ENCODE measurements at regions of chr6 and their contacts with region 1.

Region 1: DNA sequence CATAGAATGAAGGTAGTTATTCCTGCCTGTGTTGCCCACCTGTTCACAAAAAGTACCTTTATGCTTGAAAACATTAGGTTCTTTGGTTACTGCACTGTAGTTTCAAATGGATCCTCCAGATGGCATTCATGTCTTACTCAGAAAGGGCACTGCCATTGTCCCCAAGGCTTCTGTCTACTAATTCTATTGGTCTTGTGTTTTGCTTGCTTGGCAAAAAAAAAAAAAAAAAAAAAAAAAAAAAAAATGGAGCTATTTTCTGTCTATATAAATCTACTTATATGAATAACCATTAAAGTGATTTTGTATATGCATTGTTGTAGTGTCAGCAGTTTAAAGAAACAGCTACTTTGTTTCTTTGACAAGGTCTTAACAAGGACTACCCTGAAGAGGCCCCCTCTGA is 12.7 kb upstream of the EFHC1 start:
- DNase-seq: peak; percentile 79
- ATAC-seq: peak; percentile 64
- H3K4me3 ChIP-seq: no peak overlapping the region
- H3K27ac ChIP-seq: no peak overlapping the region
- H3K4me1 ChIP-seq: no peaks in the 10 kb centered on the region
- H3K27me3 ChIP-seq: no peaks in the 10 kb centered on the region
- CTCF ChIP-seq: peak; percentile 78

Region 2: GRCh38 chr6:52284460-52285176 is 122.8 kb before region 1 on chr6 and contains the start of gene MCM3:
- CTCF ChIA-PET with region 1: interaction called, 17 read pairs
- POLR2A ChIA-PET with region 1: interaction called, 8 read pairs
- intact Hi-C with region 1: no loop called
- DNase-seq: peak; percentile 99
- ATAC-seq: peak; percentile 98
- H3K4me3 ChIP-seq: peak within 1 kb of the TSS; percentile 93
- H3K27ac ChIP-seq: peak within 1 kb of the TSS; percentile 62
- H3K4me1 ChIP-seq: peaks cover 22% of the 10 kb centered on the region
- H3K27me3 ChIP-seq: no peaks in the 10 kb centered on the region
- CTCF ChIP-seq: no peak
- total RNA-seq, gene MCM3: 201 and 203 TPM in 2 replicates

Region 3: DNA sequence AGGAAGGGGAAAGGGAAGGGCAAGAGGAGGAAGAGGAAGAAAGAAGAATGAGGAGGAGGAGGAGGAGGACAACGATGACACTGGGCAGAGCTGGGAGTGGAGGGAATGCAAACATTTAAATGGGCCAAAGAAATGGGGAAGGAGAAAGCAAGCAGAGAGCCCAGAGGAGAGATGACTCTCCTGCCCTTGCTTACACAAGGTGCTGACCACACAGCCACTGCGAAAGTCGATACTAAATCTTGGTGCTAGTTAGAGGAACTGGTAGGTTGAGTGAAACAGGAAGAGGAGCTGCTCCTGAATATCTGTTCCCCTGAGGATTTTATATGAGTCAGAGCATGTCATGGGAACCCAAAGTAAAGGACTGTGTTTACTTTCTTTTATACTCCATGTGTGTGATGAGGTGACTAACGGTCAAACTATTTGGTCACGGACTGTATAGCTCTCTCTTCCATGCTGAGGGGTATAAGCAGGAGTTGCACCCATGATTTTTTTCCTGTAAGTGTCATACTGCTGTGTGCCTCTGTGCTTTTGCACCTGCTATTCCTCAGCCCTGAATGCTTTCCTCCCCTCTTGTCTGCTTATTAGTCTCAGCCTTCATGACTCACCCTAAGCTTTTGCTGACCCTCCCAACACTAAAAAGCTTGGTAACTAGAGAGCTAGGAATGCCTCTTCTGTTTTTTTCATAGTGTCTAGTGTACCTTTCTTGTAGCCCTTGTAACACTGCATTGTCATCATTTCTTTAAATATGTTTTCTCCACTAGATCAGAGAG is 55.0 kb before region 1 on chr6:
- CTCF ChIA-PET with region 1: interaction called, 13 read pairs
- POLR2A ChIA-PET with region 1: no interaction called
- intact Hi-C with region 1: no loop called
- DNase-seq: peak; percentile 99
- ATAC-seq: peak; percentile 93
- H3K4me3 ChIP-seq: peak overlapping the region; percentile 20; the same call in 1 of the 2 replicates
- H3K27ac ChIP-seq: peak overlapping the region; percentile 96
- H3K4me1 ChIP-seq: peaks cover 27% of the 10 kb centered on the region
- H3K27me3 ChIP-seq: no peaks in the 10 kb centered on the region
- CTCF ChIP-seq: no peak

Region 4: GRCh38 chr6:52419809-52420670 is 12.6 kb after region 1 on chr6 and contains the start of gene EFHC1:
- CTCF ChIA-PET with region 1: interaction called, 19 read pairs
- POLR2A ChIA-PET with region 1: no interaction called
- intact Hi-C with region 1: no loop called
- DNase-seq: peak; percentile 99
- ATAC-seq: peak; percentile 81
- H3K4me3 ChIP-seq: peak within 1 kb of the TSS; percentile 78
- H3K27ac ChIP-seq: peak within 1 kb of the TSS; percentile 39
- H3K4me1 ChIP-seq: peaks cover 62% of the 10 kb centered on the region
- H3K27me3 ChIP-seq: no peaks in the 10 kb centered on the region
- CTCF ChIP-seq: no peak
- total RNA-seq, gene EFHC1: 14.5 and 22.4 TPM in 2 replicates

Region 5: GRCh38 chr6:52475307-52475706 is 67.8 kb after region 1 on chr6:
- CTCF ChIA-PET with region 1: no interaction called
- POLR2A ChIA-PET with region 1: no interaction called
- intact Hi-C with region 1: no loop called
- DNase-seq: no peak
- ATAC-seq: no peak
- H3K4me3 ChIP-seq: no peak overlapping the region
- H3K27ac ChIP-seq: no peak overlapping the region
- H3K4me1 ChIP-seq: no peaks in the 10 kb centered on the region
- H3K27me3 ChIP-seq: no peaks in the 10 kb centered on the region
- CTCF ChIP-seq: no peak

Region 6: GRCh38 chr6:52517502-52518278 is 110.2 kb after region 1 on chr6:
- CTCF ChIA-PET with region 1: interaction called, 11 read pairs
- POLR2A ChIA-PET with region 1: no interaction called
- intact Hi-C with region 1: no loop called
- DNase-seq: peak; percentile 92
- ATAC-seq: peak; percentile 90
- H3K4me3 ChIP-seq: peak overlapping the region; percentile 9; the same call in 1 of the 2 replicates
- H3K27ac ChIP-seq: peak overlapping the region; percentile 64
- H3K4me1 ChIP-seq: peaks cover 42% of the 10 kb centered on the region
- H3K27me3 ChIP-seq: no peaks in the 10 kb centered on the region
- CTCF ChIP-seq: no peak

Region 7: DNA sequence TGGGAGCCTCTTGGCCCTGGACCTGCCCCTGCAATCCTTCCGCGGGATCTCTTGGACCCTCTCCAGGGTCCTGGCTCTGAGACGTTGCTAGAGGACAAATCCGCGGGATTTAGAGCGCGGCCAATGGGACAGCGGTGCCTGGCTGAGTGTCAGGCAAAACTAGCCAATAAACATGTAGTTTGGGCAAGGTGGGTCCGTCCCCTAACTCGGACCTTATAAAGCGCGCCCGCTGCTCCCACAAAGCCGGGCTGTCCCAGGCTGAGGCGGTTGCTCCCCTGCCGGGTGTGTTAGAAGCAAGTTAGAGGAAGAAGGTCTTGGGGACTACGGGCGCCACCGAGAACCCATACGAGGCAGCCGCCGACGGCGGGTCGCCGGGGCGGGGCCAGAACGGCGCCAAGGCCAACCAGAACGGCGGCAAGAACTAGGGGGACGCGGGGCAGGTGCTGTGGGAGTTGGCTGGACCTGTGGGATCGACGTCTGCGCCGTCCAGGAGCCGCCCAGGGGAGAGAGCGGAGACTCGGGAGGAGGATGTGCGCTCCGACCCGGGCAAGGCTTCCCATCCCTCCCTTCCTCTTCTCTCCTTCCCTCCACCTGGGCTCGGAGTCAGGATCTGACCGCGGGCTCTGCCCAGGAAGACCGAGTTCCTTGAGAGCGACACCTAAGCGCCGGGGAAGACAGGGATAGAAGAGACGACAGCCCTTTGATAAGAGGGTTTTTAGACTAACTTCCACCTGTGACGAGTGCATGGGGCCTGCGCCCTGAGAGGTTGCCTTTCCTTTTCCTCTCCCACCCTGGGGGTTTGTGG is 256.9 kb after region 1 on chr6:
- CTCF ChIA-PET with region 1: interaction called, 37 read pairs
- POLR2A ChIA-PET with region 1: no interaction called
- intact Hi-C with region 1: loop called (anchors 1 kb)
- DNase-seq: peak; percentile 94
- ATAC-seq: peak; percentile 94
- H3K4me3 ChIP-seq: peak overlapping the region; percentile 81
- H3K27ac ChIP-seq: no peak overlapping the region
- H3K4me1 ChIP-seq: peaks cover 24% of the 10 kb centered on the region
- H3K27me3 ChIP-seq: no peaks in the 10 kb centered on the region
- CTCF ChIP-seq: no peak

Region 8: GRCh38 chr6:52990342-52990741 is 582.9 kb after region 1 on chr6:
- CTCF ChIA-PET with region 1: interaction called, 10 read pairs
- POLR2A ChIA-PET with region 1: interaction called, 4 read pairs
- intact Hi-C with region 1: loop called (anchors 1 kb)
- DNase-seq: peak; percentile 90
- ATAC-seq: peak; percentile 51
- H3K4me3 ChIP-seq: peak overlapping the region; percentile 25; the same call in 1 of the 2 replicates
- H3K27ac ChIP-seq: peak overlapping the region; percentile 89
- H3K4me1 ChIP-seq: peaks cover 37% of the 10 kb centered on the region
- H3K27me3 ChIP-seq: no peaks in the 10 kb centered on the region
- CTCF ChIP-seq: no peak